Endothelial cell of umbilical vein (primary cell): ENCODE measurements at regions of chr7 and their contacts with region 1.

Region 1: DNA sequence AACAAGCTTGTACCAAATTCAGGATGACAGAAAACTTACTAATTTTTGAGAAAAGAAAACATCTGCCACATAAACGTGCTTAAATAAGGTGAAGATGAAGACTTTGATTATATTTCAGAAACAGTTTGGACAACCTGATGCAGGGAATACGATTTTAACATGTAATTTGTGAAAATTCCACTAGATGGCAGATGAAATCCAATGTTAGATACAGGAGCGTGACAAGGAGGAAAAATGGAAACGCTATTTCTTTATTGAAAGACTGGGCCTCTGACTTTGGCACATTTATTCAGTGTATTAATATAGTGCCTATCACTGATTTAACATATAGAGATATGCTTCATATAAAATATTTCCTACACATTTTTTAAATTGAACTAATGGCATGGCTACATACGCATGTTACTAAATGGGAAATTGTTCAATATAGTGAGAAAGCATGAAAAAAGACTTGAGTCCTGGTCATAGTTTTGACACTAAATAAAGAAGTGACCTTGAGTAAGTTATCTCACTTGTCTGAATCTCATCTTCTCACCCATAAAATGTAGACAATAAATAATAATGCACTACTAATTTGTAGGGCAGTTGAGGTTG is 60.7 kb downstream of the CD36 start:
- DNase-seq: peak; percentile 61
- H3K4me3 ChIP-seq: no peak overlapping the region
- H3K27ac ChIP-seq: no peak overlapping the region
- H3K4me1 ChIP-seq: no peaks in the 10 kb centered on the region
- H3K27me3 ChIP-seq: peaks cover 6 to 18% of the 10 kb centered on the region in 2 experiments
- CTCF ChIP-seq: peak; percentile 32
- POLR2A ChIP-seq: no peak

Region 2: DNA sequence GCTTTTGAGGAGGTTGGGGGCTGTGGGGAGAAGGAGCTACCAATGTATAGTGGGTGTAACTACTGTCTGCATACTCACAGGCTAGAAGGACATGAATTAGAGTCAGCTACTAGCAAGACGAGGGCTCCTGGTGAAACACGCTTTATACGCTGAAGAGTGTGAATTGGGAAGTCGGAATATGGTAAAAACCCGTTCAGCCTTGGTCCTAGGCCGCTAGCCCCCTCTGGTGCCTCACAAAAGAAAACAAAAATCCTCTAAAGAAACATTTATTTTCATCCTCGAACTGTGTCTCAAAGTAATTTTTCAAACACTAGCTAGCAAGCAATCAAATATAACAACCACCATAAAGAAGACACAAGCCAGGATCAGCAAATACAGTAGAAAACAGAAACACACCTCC is 557.8 kb after region 1 on chr7:
- CTCF ChIA-PET with region 1: interaction called, 4 read pairs
- POLR2A ChIA-PET with region 1: no interaction called
- dilution Hi-C with region 1: no loop called
- intact Hi-C with region 1: loop called (anchors 1 kb)
- DNase-seq: no peak
- H3K4me3 ChIP-seq: no peak overlapping the region
- H3K27ac ChIP-seq: no peak overlapping the region
- H3K4me1 ChIP-seq: no peaks in the 10 kb centered on the region
- H3K27me3 ChIP-seq: peaks cover 0 to 8% of the 10 kb centered on the region in 2 experiments
- CTCF ChIP-seq: no peak
- POLR2A ChIP-seq: no peak

Region 3: GRCh38 chr7:81447351-81447952 is 748.3 kb after region 1 on chr7:
- CTCF ChIA-PET with region 1: interaction called, 6 read pairs
- POLR2A ChIA-PET with region 1: no interaction called
- dilution Hi-C with region 1: no loop called
- intact Hi-C with region 1: loop called (anchors 2 kb)
- DNase-seq: peak; percentile 14
- H3K4me3 ChIP-seq: no peak overlapping the region
- H3K27ac ChIP-seq: no peak overlapping the region
- H3K4me1 ChIP-seq: no peaks in the 10 kb centered on the region
- H3K27me3 ChIP-seq: no peaks in the 10 kb centered on the region
- CTCF ChIP-seq: peak; percentile 18 to 21
- POLR2A ChIP-seq: no peak

Region 4: GRCh38 chr7:81457852-81458522 is 758.8 kb after region 1 on chr7:
- CTCF ChIA-PET with region 1: interaction called, 24 read pairs
- POLR2A ChIA-PET with region 1: no interaction called
- dilution Hi-C with region 1: no loop called
- intact Hi-C with region 1: loop called (anchors 1 kb)
- DNase-seq: peak; percentile 10
- H3K4me3 ChIP-seq: no peak overlapping the region
- H3K27ac ChIP-seq: no peak overlapping the region
- H3K4me1 ChIP-seq: no peaks in the 10 kb centered on the region
- H3K27me3 ChIP-seq: peaks cover 8 to 13% of the 10 kb centered on the region in 2 experiments
- CTCF ChIP-seq: peak; percentile 12 to 20
- POLR2A ChIP-seq: no peak

Region 5: DNA sequence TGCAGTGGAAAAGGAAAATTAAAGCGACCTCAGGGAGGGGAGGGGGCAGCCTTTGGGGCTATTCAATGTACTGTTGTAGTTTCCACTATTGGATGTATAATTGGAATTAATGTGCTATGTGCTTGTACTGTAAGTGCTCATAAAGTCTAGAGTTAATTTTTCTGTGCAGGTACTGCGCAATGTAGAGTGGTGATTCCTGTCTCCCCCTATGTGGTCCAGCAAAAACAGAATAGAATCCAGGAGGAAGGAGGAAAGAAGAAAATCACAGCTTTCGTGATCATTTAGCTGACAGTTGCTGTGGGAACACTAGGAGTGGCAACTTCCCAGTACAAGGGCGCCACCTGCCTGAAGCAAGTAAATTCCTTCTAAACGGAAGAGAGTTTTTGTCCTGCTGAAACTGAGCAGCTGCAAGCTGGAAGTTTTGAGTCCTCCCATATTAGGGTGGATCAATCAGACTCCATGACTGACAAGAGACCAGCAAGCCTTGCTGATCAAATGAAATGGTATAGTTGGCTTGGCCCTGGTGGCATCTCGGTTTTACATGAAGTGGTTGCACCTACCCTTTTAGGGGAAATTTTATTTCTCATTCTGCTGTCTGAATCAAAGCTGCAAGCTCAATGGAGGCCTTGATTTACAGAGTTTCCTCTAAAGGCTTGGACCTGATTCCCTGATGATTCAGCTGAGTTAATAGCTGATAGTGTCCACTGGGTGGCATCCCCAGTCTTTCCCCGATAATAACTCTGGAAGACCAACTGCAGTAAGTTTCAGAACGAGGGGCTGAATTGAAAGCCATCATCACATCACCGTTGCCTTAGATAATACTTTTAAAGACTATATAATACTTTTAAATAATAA is 771.0 kb after region 1 on chr7:
- CTCF ChIA-PET with region 1: interaction called, 72 read pairs
- POLR2A ChIA-PET with region 1: no interaction called
- dilution Hi-C with region 1: no loop called
- intact Hi-C with region 1: loop called (anchors 1 kb)
- DNase-seq: peak; percentile 54
- H3K4me3 ChIP-seq: no peak overlapping the region
- H3K27ac ChIP-seq: no peak overlapping the region
- H3K4me1 ChIP-seq: no peaks in the 10 kb centered on the region
- H3K27me3 ChIP-seq: peaks cover 7% of the 10 kb centered on the region in 2 experiments
- CTCF ChIP-seq: peak; percentile 62 to 70
- POLR2A ChIP-seq: no peak